ENCODE measurements at regions of chr4 and their contacts with region 1.

Region 1: DNA sequence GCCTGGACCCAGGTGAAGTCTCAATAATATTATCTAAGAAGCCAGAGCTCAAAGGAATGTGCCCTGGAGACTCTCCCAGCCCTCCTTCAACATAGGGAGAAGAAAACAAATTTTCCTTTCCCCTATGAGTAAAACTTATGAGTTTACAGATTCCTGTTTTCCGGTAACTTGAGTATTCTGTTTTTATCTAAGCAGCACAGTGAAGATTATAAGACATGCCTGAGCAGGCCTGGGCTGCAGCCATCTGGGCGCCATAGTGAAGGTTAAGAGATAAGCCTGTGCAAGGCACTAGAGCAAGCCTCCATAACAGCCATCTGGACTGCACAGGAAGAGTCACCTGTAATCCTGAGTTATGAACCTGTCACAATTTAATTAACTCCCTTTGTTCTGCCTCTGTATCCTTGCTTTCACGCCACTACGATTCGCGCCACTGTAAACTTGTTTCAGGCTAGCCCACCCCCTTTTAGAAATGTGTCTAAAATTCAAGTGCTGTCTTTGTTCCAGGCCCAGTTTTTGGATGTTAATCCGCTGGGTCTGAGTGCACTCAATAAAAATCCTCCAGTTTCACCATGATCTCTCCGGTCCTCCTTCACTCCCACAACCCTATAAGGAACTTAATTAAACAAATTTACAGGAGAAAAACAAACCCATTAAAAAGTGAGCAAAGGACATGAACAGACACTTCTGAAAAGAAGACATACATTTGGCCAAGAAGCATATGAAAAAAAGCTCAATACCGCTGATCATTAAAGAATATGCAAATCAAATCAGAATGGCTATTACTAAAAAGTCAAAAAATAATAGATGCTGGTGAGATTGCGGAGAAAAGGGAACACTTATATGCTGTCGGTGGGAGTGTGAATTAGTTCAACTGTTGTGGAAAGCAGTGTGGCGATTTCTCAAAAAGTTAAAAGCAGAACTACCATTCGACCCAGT is 189.5 kb downstream of the APBB2 start:
- DNase-seq: no peak
- H3K4me3 ChIP-seq: no peak overlapping the region
- H3K27ac ChIP-seq: no peak overlapping the region
- H3K4me1 ChIP-seq: no peaks in the 10 kb centered on the region
- H3K27me3 ChIP-seq: no peaks in the 10 kb centered on the region
- CTCF ChIP-seq: no peak
- EP300 ChIP-seq: peak in 1 of 2 experiments; percentile 54; a peak in 1 of 3 replicates
- POLR2A ChIP-seq: no peak
- RAD21 ChIP-seq: no peak

Region 2: GRCh38 chr4:40992472-40993295 is 32.1 kb before region 1 on chr4:
- CTCF ChIA-PET with region 1: no interaction called
- POLR2A ChIA-PET with region 1: no interaction called
- DNase-seq: no peak
- H3K4me3 ChIP-seq: no peak overlapping the region
- H3K27ac ChIP-seq: no peak overlapping the region
- H3K4me1 ChIP-seq: no peaks in the 10 kb centered on the region; a peak in 1 of 7 replicates
- H3K27me3 ChIP-seq: no peaks in the 10 kb centered on the region
- CTCF ChIP-seq: no peak
- EP300 ChIP-seq: no peak
- POLR2A ChIP-seq: no peak
- RAD21 ChIP-seq: no peak

Region 3: GRCh38 chr4:41050866-41051775 is 26.3 kb after region 1 on chr4:
- CTCF ChIA-PET with region 1: interaction called, 10 read pairs
- POLR2A ChIA-PET with region 1: no interaction called
- DNase-seq: no peak
- H3K4me3 ChIP-seq: no peak overlapping the region
- H3K27ac ChIP-seq: no peak overlapping the region
- H3K4me1 ChIP-seq: no peaks in the 10 kb centered on the region
- H3K27me3 ChIP-seq: no peaks in the 10 kb centered on the region; a peak in 1 of 7 replicates
- CTCF ChIP-seq: no peak
- EP300 ChIP-seq: no peak
- POLR2A ChIP-seq: no peak
- RAD21 ChIP-seq: no peak